ENCODE measurements at regions of chr1 and their contacts with region 1.

Region 1: GRCh38 chr1:40143891-40144575 is 17.2 kb upstream of the RLF start:
- DNase-seq: peak; percentile 24 to 62
- H3K4me3 ChIP-seq: no peak overlapping the region
- H3K27ac ChIP-seq: no peak overlapping the region
- H3K4me1 ChIP-seq: no peaks in the 10 kb centered on the region
- H3K27me3 ChIP-seq: no peaks in the 10 kb centered on the region
- CTCF ChIP-seq: peak; percentile 68 to 79 (median 74)
- POLR2A ChIP-seq: no peak

Region 2: DNA sequence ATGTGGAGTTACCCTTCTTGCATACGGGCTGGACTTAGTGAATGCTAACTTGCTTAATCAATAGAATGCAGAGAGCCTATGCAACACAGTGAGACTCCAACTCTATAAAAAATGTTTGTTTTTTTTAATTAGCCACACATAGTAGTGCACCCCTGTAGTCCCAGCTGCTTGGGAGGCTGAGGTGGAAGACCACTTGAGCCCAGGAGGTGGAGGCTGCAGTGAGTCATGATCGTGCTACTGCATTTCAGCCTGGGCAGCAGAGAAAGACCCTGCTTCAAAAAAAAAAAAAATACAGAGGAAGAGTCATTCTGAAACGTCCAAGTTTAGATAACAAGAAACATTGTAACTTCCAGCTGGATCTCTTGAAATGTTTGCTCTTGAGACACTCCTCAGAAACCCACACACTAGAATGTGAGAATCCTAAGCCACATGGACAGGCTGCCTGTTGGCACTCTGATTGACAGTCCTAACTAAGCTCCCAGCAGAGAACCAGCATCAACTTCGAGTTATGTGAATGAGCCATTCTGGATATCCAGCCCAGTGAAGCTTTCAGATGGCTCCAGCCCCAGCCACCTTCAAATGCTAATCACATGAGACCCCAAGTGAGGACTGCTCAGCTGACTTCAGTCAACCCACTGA is 123.5 kb before region 1 on chr1:
- intact Hi-C with region 1: no loop called
- DNase-seq: no peak
- H3K4me3 ChIP-seq: no peak overlapping the region
- H3K27ac ChIP-seq: no peak overlapping the region
- H3K4me1 ChIP-seq: no peaks in the 10 kb centered on the region
- H3K27me3 ChIP-seq: no peaks in the 10 kb centered on the region
- CTCF ChIP-seq: no peak
- POLR2A ChIP-seq: no peak

Region 3: DNA sequence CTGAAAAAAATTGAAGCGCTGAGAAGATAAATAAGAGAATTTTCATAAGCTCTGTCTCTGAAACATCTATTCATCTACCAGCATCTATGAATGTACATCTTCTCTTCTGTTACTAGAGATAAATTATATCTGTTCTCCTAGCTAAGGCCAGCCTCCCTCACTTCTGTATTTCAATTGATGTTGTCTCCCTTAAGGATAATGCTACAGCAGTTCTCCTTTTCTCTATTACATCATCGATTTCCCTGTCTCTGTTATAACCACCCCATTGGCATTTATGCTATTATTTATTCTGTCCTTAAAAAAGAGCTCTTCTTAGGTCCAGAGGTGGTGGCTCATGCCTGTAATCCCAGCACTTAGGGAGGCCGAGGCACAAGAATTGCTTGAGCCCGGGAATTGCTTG is 60.8 kb after region 1 on chr1:
- intact Hi-C with region 1: no loop called
- DNase-seq: no peak
- H3K4me3 ChIP-seq: no peak overlapping the region
- H3K27ac ChIP-seq: no peak overlapping the region
- H3K4me1 ChIP-seq: no peaks in the 10 kb centered on the region
- H3K27me3 ChIP-seq: no peaks in the 10 kb centered on the region
- CTCF ChIP-seq: no peak
- POLR2A ChIP-seq: no peak

Region 4: DNA sequence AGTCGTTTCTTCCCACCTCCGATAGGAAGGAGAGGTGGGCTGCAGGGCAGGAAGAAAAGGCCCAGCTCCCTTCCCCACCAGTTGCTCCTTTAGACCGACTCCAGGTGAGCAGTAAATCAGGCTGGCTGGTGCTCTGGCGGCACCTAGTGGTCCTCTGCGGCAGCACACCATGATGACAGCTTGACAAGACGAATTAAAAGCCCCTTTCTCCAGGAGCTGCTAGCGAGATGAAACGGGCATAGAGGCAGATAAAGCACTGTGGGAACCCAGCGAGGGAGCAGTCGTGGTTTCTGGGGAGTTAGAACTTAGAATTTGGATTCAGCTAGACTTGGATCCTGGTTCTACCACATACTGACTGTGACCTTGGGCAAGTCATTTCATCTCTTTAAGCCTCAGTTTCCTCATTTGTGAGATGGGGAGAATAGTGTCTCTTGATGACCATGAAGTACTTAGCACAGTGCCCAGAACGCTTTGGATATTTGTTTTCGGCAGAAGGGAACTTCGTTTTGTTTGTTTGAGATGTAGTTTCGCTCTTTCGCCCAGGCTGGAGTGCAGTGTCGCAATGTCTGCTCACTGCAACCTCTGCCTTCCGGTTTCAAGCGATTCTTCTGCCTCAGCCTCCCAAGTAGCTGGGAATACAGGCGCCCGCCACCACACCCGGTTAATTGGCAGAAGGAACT is 194.9 kb after region 1 on chr1:
- intact Hi-C with region 1: loop called (anchors 10 kb)
- DNase-seq: peak; percentile 63 to 75
- H3K4me3 ChIP-seq: no peak overlapping the region
- H3K27ac ChIP-seq: no peak overlapping the region
- H3K4me1 ChIP-seq: no peaks in the 10 kb centered on the region
- H3K27me3 ChIP-seq: no peaks in the 10 kb centered on the region
- CTCF ChIP-seq: peak; percentile 90 to 97 (median 93)
- POLR2A ChIP-seq: no peak

Region 5: DNA sequence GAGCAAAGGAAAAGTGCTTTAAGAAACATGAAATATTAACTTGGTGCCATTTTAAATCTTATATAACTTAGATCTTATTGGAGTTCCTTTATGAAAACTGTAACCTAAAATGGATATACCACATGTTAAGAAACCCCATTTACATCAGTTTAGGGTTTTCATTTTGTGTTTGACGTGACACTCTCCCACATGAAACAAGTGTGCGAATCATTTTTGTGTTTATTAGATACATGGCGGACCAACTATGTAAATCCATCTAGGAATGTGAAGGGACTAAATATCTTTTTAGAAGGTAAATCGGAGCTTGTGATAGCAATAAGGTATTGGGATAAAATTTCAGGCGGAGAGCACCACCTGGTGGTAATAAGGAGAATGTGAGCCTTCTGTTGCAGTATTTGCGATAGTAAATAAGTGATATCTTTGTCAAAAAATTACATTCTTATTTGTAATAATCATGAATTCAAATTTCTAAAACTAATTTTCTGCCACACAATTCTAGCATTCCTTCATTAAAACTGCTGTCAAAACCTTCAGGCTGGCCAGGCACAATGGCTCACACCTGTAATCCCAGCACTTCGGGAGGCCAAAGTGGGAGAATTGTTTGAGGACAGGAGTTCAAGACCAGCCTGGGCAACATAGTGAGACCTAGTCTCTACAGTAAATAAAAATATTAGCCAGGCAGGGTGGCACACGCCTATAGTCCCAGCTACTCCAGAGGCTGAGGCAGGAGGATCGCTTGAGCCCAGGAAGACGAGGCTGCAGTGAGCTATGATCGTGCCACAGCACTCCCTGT is 260.8 kb after region 1 on chr1:
- intact Hi-C with region 1: loop called (anchors 10 kb)
- DNase-seq: peak in 1 of 2 donors; percentile 40
- H3K4me3 ChIP-seq: no peak overlapping the region
- H3K27ac ChIP-seq: no peak overlapping the region
- H3K4me1 ChIP-seq: no peaks in the 10 kb centered on the region
- H3K27me3 ChIP-seq: no peaks in the 10 kb centered on the region
- CTCF ChIP-seq: peak; percentile 85 to 90 (median 88)
- POLR2A ChIP-seq: no peak

Measured in uterus (tissue), 4 donors.